PC-9 (cell line): ENCODE measurements at regions of chr11 and their contacts with region 1.

Region 1: DNA sequence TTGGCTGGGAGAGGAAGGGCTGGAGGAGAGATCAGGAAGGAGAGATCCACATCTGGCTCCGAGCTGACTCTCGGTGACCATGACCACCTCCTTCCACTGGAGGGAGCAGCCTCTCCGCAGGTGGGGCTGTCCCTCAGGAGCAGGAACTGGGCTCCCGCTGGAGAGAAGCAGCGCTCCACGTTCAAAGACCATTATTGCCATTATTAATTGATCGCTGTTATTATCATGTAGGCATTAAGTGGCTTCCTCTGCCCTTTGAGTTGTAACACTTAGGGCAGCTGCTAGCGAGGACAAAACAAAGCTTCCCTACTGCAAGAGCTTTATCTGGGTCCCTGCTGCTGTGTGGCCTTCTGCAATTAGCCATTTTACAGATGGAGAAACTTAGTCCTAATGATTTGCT is 251.9 kb downstream of the ST3GAL4 start:
- DNase-seq: peak in 1 of 2 experiments; percentile 55
- H3K4me3 ChIP-seq: no peak overlapping the region
- H3K27ac ChIP-seq: no peak overlapping the region
- H3K4me1 ChIP-seq: no peaks in the 10 kb centered on the region
- H3K27me3 ChIP-seq: peaks cover 97% of the 10 kb centered on the region
- CTCF ChIP-seq: peak; percentile 73

Region 2: GRCh38 chr11:126570489-126570888 is 36.9 kb before region 1 on chr11:
- CTCF ChIA-PET with region 1: no interaction called
- POLR2A ChIA-PET with region 1: no interaction called
- intact Hi-C with region 1: no loop called
- DNase-seq: no peak
- H3K4me3 ChIP-seq: no peak overlapping the region
- H3K27ac ChIP-seq: no peak overlapping the region
- H3K4me1 ChIP-seq: no peaks in the 10 kb centered on the region
- H3K27me3 ChIP-seq: peaks cover 83% of the 10 kb centered on the region
- CTCF ChIP-seq: peak; percentile 32; the same call in 1 of the 2 replicates

Region 3: GRCh38 chr11:126585781-126586491 is 21.4 kb before region 1 on chr11:
- CTCF ChIA-PET with region 1: no interaction called
- POLR2A ChIA-PET with region 1: no interaction called
- intact Hi-C with region 1: no loop called
- DNase-seq: peak; percentile 45 to 62
- H3K4me3 ChIP-seq: no peak overlapping the region
- H3K27ac ChIP-seq: no peak overlapping the region
- H3K4me1 ChIP-seq: no peaks in the 10 kb centered on the region
- H3K27me3 ChIP-seq: peaks cover 92% of the 10 kb centered on the region
- CTCF ChIP-seq: no peak

Region 4: GRCh38 chr11:126716456-126717083 is 109.2 kb after region 1 on chr11:
- CTCF ChIA-PET with region 1: no interaction called
- POLR2A ChIA-PET with region 1: no interaction called
- intact Hi-C with region 1: loop called (anchors 5 kb)
- DNase-seq: peak in 1 of 2 experiments; percentile 30
- H3K4me3 ChIP-seq: no peak overlapping the region
- H3K27ac ChIP-seq: no peak overlapping the region
- H3K4me1 ChIP-seq: no peaks in the 10 kb centered on the region
- H3K27me3 ChIP-seq: peaks cover 82% of the 10 kb centered on the region
- CTCF ChIP-seq: peak; percentile 63

Region 5: GRCh38 chr11:126764231-126764630 is 156.9 kb after region 1 on chr11:
- CTCF ChIA-PET with region 1: no interaction called
- POLR2A ChIA-PET with region 1: no interaction called
- intact Hi-C with region 1: loop called (anchors 10 kb)
- DNase-seq: no peak
- H3K4me3 ChIP-seq: no peak overlapping the region
- H3K27ac ChIP-seq: no peak overlapping the region
- H3K4me1 ChIP-seq: no peaks in the 10 kb centered on the region
- H3K27me3 ChIP-seq: peaks cover 35% of the 10 kb centered on the region
- CTCF ChIP-seq: no peak

Region 6: DNA sequence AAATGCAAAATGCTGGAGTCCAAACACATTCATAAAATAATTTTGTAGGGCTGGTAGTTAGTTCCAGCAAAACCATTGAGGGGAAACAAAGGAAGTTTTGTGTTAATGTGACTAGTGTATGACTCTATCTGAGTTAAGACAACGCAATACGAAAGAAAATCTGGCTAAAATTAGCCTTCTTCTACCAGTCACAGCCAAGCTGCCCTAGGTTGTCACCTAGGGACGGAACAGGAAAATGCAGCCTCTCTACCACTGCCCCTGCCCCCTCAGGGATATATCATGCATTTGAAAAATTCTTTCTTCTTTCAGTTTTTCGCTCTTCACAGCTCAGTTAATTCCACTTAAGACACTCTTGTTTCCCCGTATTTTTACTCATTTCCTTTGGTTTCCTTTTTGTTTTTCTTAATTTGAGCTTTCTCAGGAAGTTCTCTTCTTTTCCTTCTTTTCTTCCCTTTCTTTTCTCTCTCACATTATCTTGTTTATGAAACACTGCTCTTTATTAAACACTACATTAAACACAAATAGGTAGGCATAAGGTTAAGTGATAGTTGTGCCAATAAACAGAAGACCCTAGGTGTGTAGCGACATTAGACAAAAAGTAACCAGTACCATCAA is 362.6 kb after region 1 on chr11:
- CTCF ChIA-PET with region 1: no interaction called
- POLR2A ChIA-PET with region 1: no interaction called
- intact Hi-C with region 1: loop called (anchors 2 kb)
- DNase-seq: no peak
- H3K4me3 ChIP-seq: no peak overlapping the region
- H3K27ac ChIP-seq: no peak overlapping the region
- H3K4me1 ChIP-seq: no peaks in the 10 kb centered on the region
- H3K27me3 ChIP-seq: peaks cover 38% of the 10 kb centered on the region
- CTCF ChIP-seq: peak; percentile 46; the same call in 1 of the 2 replicates

Region 7: GRCh38 chr11:127003260-127003981 is 396.0 kb after region 1 on chr11:
- CTCF ChIA-PET with region 1: interaction called, 3 read pairs
- POLR2A ChIA-PET with region 1: no interaction called
- intact Hi-C with region 1: loop called (anchors 1 kb)
- DNase-seq: peak in 1 of 2 experiments; percentile 63
- H3K4me3 ChIP-seq: no peak overlapping the region
- H3K27ac ChIP-seq: no peak overlapping the region
- H3K4me1 ChIP-seq: no peaks in the 10 kb centered on the region
- H3K27me3 ChIP-seq: peaks cover 51% of the 10 kb centered on the region
- CTCF ChIP-seq: no peak

Region 8: DNA sequence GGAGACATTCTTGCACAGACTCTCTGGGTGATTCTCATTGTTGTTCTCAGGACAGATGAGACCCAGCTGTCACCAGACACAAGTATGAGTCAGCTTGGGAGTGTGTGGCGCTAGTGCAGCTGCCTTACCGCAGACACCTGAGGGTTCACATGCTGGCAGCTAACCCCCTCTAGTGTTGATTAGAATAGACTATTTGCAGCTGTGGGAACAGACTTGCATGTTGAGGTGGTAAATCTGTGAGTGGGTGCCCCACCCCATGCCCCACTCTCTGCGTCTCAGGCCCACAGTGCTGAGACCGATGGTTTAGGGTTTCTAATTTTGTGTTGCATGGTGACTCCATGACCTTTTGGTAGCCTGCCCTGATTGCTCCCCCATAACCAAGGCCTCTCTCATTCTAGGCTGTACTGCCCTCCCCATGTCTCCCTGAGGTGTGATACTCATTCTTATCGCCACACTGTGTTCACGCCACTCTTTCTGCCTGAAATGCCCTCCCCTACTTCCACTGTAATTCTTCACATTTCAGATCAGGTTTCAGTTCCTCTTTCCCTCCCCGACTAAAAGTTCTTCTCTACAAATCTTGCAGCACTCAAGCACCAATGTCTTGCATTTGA is 466.9 kb after region 1 on chr11:
- CTCF ChIA-PET with region 1: no interaction called
- POLR2A ChIA-PET with region 1: no interaction called
- intact Hi-C with region 1: loop called (anchors 1 kb)
- DNase-seq: peak; percentile 37 to 59
- H3K4me3 ChIP-seq: no peak overlapping the region
- H3K27ac ChIP-seq: no peak overlapping the region
- H3K4me1 ChIP-seq: no peaks in the 10 kb centered on the region
- H3K27me3 ChIP-seq: peaks cover 33% of the 10 kb centered on the region
- CTCF ChIP-seq: no peak; the same call in 1 of the 2 replicates

Region 9: DNA sequence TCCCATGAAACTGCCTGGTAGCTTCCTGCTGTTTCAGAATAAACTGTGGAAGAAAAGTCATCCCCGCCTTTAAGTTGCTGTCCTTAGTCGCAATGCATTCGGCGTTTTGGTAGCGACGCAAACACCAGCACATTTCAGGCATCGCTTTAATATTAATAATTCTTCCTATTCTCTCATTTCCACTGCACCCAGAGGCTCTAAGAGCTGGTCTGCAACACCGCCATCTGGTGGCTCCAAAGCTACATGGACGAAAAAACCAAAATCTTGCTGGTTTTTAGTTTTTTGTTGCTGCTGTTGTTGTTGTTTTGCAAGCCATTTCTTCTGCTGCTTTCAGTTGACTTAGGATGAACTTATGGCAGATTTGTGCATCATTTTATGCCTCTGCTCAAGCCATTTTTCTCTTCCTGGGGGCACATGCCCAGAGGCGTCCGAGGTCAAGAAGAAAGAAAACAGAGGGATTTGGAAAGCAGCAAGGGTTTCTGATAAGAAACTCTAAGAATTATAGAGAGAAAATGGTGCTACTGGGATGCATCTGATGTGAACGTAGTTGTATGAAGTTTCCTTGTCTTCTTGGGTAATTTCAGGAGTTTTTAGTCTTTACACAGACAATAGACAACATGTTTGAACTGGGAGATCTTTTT is 738.6 kb after region 1 on chr11:
- CTCF ChIA-PET with region 1: no interaction called
- POLR2A ChIA-PET with region 1: no interaction called
- intact Hi-C with region 1: loop called (anchors 5 kb)
- DNase-seq: peak in 1 of 2 experiments; percentile 16
- H3K4me3 ChIP-seq: no peak overlapping the region
- H3K27ac ChIP-seq: no peak overlapping the region
- H3K4me1 ChIP-seq: no peaks in the 10 kb centered on the region
- H3K27me3 ChIP-seq: 0 out of 2 replicates have a peak, but pooled peaks cover 5% of the 10 kb centered on the region
- CTCF ChIP-seq: peak; percentile 76